ENCODE measurements at regions of chr12 and their contacts with region 1.

Region 1: GRCh38 chr12:27305673-27306456 is 26.8 kb upstream of the BMAL2 start:
- H3K4me3 Mint-ChIP-seq: no peak overlapping the region
- H3K27ac Mint-ChIP-seq: no peak overlapping the region
- H3K4me1 Mint-ChIP-seq: no peaks in the 10 kb centered on the region
- H3K27me3 Mint-ChIP-seq: no peaks in the 10 kb centered on the region

Region 2: DNA sequence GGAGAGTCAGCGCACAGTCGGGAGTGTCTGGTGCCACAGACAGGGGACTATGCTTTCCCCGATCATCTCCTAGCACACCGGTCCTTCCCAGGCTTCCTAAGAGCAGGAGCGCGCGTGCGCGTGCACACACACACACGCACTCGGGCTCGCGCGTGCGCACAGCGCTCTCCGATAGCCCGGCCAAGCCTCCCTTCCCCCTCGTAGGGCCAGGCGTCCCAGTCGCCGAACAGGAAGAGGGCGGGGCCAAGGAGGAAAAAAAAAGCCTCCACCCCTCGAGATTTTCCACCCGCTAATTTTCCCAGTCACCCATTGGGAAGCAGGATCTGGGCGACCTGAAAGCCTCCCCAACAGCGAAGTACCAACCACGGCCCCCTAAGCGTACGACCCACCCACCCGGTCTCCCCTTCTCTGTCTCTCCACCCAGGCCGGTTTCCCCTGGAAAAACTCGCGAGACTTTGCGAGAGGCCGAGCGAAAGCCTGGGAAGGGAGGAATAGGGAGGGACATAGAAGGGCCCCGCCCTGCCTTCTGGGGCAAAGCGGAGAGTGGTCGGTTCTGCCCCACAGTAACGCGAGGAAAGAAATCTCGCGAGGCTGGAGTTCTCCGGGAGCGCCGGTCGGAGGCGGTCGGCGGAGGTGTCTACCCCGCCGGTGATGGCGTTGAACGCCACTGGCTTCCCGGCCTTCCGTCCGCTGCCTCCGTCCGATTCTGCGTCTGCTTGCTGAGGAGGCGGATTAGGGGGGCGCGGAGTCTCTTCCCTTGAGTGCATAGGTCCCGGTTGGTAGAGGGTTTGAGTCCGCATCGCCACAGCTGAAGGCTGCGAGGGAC is 367.8 kb before region 1 on chr12 and contains the starts of genes FGFR1OP2 and INTS13:
- intact Hi-C with region 1: loop called (anchors 10 kb)
- H3K4me3 Mint-ChIP-seq: peak within 1 kb of the TSS; percentile 96
- H3K27ac Mint-ChIP-seq: peak within 1 kb of the TSS; percentile 99
- H3K4me1 Mint-ChIP-seq: peaks cover 42% of the 10 kb centered on the region
- H3K27me3 Mint-ChIP-seq: no peaks in the 10 kb centered on the region

Region 3: GRCh38 chr12:27014085-27014858 is 291.6 kb before region 1 on chr12 and contains the start of gene TM7SF3:
- intact Hi-C with region 1: loop called (anchors 5 kb)
- H3K4me3 Mint-ChIP-seq: peak within 1 kb of the TSS; percentile 93
- H3K27ac Mint-ChIP-seq: peak within 1 kb of the TSS; percentile 93
- H3K4me1 Mint-ChIP-seq: peaks cover 47% of the 10 kb centered on the region
- H3K27me3 Mint-ChIP-seq: no peaks in the 10 kb centered on the region

Region 4: DNA sequence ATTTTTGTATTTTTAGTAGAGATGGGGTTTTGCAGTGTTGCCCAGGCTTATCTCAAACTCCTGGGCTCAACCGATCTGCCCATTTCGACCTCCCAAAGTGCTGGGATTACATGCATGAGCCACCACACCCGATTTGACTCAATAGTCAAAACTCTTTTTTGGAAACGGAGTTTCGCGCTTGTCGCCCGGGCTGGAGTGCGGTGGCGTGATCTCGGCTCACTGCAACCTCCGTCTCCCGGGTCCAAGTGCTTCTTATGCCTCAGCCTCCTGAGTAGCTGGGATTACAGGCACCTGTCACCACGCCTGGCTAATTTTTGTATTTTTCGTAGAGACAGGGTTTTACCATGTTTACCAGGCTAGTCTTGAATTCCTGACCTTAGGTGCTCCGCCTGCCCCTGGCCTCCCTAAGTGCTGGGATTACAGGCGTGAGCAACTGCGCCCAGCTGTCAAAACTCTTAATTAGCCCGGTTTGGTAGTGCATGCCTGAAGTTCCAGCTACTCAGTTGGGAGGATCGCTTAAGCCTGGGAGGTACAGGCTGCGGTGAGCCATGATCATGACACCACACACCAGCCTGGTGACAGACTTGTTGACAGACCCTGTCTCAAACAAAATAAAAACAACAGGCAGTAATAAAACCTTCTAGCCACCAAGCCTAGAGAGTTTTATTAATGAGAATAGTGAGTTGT is 271.1 kb before region 1 on chr12:
- intact Hi-C with region 1: loop called (anchors 1 kb)
- H3K4me3 Mint-ChIP-seq: no peak overlapping the region
- H3K27ac Mint-ChIP-seq: no peak overlapping the region
- H3K4me1 Mint-ChIP-seq: peaks cover 9% of the 10 kb centered on the region
- H3K27me3 Mint-ChIP-seq: no peaks in the 10 kb centered on the region

Region 5: DNA sequence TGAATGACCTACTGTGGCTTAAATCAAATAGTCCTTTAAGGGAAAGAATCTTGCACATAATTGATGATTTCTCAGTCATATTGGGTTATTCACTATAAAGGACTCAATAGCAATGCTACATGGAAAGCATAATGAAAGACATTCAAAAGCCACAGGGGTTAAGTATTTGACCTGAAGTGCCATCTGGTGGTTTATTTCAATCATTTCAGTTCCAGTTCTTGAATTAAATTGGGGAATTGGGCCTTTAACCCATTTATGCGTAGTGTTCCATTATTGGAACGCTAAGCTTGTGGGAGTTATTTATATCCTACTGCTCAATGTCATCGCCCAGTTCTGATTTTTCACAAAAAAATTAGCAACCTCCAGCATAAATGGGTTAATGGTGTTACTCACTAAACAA is 182.2 kb before region 1 on chr12:
- intact Hi-C with region 1: loop called (anchors 5 kb)
- H3K4me3 Mint-ChIP-seq: no peak overlapping the region
- H3K27ac Mint-ChIP-seq: no peak overlapping the region
- H3K4me1 Mint-ChIP-seq: no peaks in the 10 kb centered on the region
- H3K27me3 Mint-ChIP-seq: peaks cover 3% of the 10 kb centered on the region

Region 6: GRCh38 chr12:27142101-27142721 is 163.7 kb before region 1 on chr12:
- intact Hi-C with region 1: loop called (anchors 5 kb)
- H3K4me3 Mint-ChIP-seq: no peak overlapping the region
- H3K27ac Mint-ChIP-seq: no peak overlapping the region
- H3K4me1 Mint-ChIP-seq: peaks cover 8% of the 10 kb centered on the region
- H3K27me3 Mint-ChIP-seq: no peaks in the 10 kb centered on the region

Region 7: GRCh38 chr12:27257104-27257843 is 48.6 kb before region 1 on chr12:
- intact Hi-C with region 1: loop called (anchors 10 kb)
- H3K4me3 Mint-ChIP-seq: no peak overlapping the region
- H3K27ac Mint-ChIP-seq: no peak overlapping the region
- H3K4me1 Mint-ChIP-seq: peaks cover 64% of the 10 kb centered on the region
- H3K27me3 Mint-ChIP-seq: no peaks in the 10 kb centered on the region

Region 8: DNA sequence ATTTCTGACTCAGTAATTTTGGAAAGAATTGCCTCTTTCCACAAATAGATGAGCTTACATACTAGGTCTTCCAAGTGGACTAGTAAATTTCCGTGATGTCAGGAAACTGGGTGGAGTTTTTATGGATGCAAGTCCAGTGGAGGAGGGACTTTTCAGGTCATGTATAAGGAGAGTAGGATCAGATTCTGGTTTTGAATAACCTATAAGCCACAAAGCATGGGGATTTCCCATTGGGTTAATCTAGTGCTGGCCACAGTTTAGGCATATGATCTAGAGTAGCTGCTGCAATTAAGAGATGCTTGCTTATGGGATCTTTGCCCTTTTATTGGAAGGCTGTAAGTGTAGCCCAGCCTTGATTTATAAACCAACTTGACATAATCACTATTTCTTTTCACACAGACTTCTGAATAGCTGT is 28.0 kb before region 1 on chr12:
- intact Hi-C with region 1: no loop called
- H3K4me3 Mint-ChIP-seq: no peak overlapping the region
- H3K27ac Mint-ChIP-seq: no peak overlapping the region
- H3K4me1 Mint-ChIP-seq: peaks cover 25% of the 10 kb centered on the region
- H3K27me3 Mint-ChIP-seq: no peaks in the 10 kb centered on the region

Region 9: DNA sequence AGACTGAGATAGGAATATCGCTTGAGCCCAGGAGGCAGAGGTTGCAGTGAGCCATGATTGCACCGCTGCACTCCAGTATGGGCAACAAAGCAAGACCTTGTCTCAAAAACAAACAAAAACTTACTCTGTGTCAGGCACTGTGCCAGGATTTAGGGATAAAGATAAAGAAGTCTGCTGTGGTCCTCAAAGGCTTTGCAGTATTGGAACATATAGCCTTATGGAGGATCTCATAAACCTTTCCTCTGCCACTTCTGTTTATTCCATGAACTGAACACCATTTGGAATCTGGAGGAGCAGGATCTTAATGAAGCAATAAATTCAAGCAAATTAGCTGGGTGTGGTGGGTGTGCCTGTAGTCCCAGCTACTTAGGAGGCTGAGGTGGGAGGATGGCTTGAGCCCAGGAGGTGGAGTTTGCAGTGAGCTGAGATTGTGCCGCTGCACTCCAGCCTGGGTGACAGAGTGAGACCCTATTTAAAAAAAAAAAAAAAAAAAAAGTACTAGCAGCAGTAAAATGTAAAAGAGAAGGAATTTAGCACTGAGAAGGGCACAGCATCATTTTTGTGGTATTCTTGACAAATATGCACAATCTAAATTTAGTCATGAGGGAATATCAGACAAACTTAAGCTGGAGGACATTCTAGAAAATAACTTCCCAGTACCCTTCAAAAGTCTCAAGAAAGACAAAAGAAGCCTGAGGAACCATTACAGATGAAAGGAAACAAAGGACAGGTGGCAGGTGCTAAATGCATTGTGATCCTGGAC is 53.9 kb after region 1 on chr12:
- intact Hi-C with region 1: no loop called
- H3K4me3 Mint-ChIP-seq: no peak overlapping the region
- H3K27ac Mint-ChIP-seq: no peak overlapping the region
- H3K4me1 Mint-ChIP-seq: peaks cover 6% of the 10 kb centered on the region
- H3K27me3 Mint-ChIP-seq: no peaks in the 10 kb centered on the region